AG04450 (cell line): ENCODE measurements at regions of chr1 and their contacts with region 1.

Region 1: DNA sequence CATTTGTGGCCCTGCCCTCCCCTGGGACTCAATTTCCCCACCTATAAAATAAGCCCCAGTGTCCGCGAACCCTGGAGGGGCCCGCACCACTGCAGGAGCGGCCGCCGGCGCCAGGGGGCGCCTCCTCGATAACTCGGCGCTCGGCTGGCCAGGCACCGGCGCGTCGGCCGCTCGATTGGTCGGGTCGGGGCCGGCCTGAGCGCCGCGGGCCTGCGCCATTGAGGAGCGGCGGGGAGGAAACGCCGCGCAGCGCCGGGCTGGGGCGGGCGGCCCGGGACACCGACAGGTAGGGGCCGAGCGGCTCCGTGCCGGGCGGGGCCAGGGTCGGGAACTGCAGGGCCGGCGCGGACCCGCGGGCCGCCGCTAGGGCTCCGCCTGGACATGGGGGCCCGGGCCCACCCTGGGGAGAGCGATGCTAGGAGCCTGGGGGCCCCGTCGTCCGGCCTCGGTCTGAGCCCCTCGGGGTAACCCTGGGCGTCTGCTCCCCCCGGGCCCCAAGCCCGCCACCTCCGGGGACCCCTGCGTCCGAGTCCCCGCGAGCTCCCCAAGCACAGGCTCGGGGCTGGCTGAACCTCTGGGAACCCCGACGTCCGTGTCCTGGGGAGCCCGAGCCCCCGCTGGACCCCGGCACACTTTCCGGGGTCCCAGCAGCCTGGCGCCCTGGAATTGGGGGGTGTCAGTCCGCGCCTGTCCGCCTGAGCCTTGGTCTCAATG is at the start of gene VPS13D:
- DNase-seq: peak; percentile 21
- H3K4me3 ChIP-seq: peak within 1 kb of the TSS; percentile 91
- H3K27ac ChIP-seq: no peak within 1 kb of the TSS
- H3K27me3 ChIP-seq: peaks cover 6% of the 10 kb centered on the region
- CTCF ChIP-seq: peak; percentile 86
- polyA plus RNA-seq, gene VPS13D: 18.3 and 19.0 TPM in 2 replicates

Region 2: GRCh38 chr1:12095452-12096263 is 134.3 kb before region 1 on chr1:
- CTCF ChIA-PET with region 1: no interaction called
- POLR2A ChIA-PET with region 1: no interaction called
- DNase-seq: no peak
- H3K4me3 ChIP-seq: no peak overlapping the region
- H3K27ac ChIP-seq: no peak overlapping the region
- H3K27me3 ChIP-seq: no peaks in the 10 kb centered on the region
- CTCF ChIP-seq: no peak

Region 3: DNA sequence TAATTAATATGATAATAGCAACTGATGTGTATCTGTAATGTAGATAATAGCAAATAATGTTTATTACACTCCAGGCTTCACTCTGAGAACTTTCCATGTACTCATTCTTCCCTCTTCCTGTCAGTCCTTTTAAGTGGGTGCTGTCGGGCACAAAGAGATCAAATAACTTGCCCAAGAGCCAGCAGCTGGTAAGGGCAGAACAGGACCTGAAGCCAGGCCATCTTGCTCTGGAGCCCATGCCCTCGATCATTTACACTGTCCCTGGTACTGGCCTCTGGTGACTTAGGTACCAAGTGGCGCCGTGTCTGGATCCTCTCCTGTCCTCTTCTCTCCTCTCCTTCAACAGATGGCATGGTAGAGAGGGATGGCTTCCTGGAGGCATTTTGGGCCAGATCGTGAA is 97.0 kb after region 1 on chr1:
- CTCF ChIA-PET with region 1: interaction called, 15 read pairs
- POLR2A ChIA-PET with region 1: no interaction called
- DNase-seq: no peak
- H3K4me3 ChIP-seq: no peak overlapping the region
- H3K27ac ChIP-seq: no peak overlapping the region
- H3K27me3 ChIP-seq: no peaks in the 10 kb centered on the region
- CTCF ChIP-seq: no peak